SK-N-SH (cell line): ENCODE measurements at regions of chrX and their contacts with region 1.

Region 1: GRCh38 chrX:134377537-134377936 is 82.4 kb upstream of the HPRT1 start:
- DNase-seq: peak; percentile 37
- H3K4me3 ChIP-seq: no peak overlapping the region
- H3K27ac ChIP-seq: no peak overlapping the region
- H3K4me1 ChIP-seq: no peaks in the 10 kb centered on the region; a peak in 1 of 4 replicates
- H3K27me3 ChIP-seq: no peaks in the 10 kb centered on the region
- CTCF ChIP-seq: peak; percentile 72
- EP300 ChIP-seq: no peak
- RAD21 ChIP-seq: peak; percentile 63

Region 2: DNA sequence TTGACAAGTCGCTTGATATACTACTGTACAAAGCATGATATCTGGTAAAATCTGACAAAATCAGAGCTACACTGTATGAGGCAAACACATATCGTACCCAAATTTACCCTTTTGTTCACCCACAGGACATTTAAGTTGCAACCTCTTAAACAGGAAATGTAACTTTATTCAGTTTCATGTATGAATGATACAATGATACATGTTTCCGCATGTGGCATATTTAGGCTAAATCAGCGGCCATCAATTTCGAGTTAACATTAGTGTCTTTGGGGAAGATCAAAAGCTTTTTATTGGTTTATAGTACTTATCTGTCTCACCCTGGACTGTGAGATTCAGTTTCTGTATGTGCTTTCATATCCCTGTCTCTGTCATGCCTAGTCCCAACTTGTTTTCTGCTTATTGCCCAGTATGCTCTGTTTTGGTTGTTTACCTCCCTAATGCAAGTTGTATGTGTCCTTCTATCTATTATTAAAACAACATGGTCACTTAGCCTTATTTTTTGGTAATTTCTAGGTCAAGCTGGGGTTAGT is 14.9 kb before region 1 on chrX:
- CTCF ChIA-PET with region 1: interaction called, 10 read pairs
- POLR2A ChIA-PET with region 1: no interaction called
- DNase-seq: no peak
- H3K4me3 ChIP-seq: no peak overlapping the region
- H3K27ac ChIP-seq: no peak overlapping the region
- H3K4me1 ChIP-seq: no peaks in the 10 kb centered on the region
- H3K27me3 ChIP-seq: peaks cover 7% of the 10 kb centered on the region; the same call in 1 of the 2 replicates
- CTCF ChIP-seq: no peak
- EP300 ChIP-seq: no peak
- RAD21 ChIP-seq: no peak

Region 3: GRCh38 chrX:134388161-134389109 is 10.9 kb after region 1 on chrX:
- CTCF ChIA-PET with region 1: interaction called, 19 read pairs
- POLR2A ChIA-PET with region 1: no interaction called
- DNase-seq: no peak
- H3K4me3 ChIP-seq: no peak overlapping the region
- H3K27ac ChIP-seq: no peak overlapping the region
- H3K4me1 ChIP-seq: no peaks in the 10 kb centered on the region
- H3K27me3 ChIP-seq: no peaks in the 10 kb centered on the region
- CTCF ChIP-seq: no peak
- EP300 ChIP-seq: no peak
- RAD21 ChIP-seq: no peak

Region 4: DNA sequence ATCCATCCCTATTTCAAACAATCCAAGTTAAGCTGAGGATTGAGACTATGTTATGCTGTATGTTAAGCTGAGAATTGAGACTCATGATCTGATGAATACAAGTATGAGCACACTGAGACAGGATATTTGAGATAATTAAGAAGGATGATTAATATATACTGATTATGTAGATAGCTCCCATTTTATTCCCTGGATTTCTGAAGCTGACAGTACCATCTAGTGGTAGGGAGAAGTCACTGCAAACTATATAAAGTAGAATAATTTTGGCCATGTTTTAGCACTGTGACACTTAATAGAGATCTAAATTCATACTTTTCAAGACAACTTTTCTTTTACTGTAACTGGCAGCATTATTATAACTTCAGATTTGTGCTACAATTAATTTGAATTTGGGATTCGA is 18.6 kb after region 1 on chrX:
- CTCF ChIA-PET with region 1: interaction called, 24 read pairs
- POLR2A ChIA-PET with region 1: no interaction called
- DNase-seq: peak; percentile 38
- H3K4me3 ChIP-seq: no peak overlapping the region
- H3K27ac ChIP-seq: peak overlapping the region in 1 of 2 experiments; percentile 58; a peak in 1 of 4 replicates
- H3K4me1 ChIP-seq: no peaks in the 10 kb centered on the region; a peak in 1 of 4 replicates
- H3K27me3 ChIP-seq: no peaks in the 10 kb centered on the region
- CTCF ChIP-seq: peak; percentile 93
- EP300 ChIP-seq: no peak
- RAD21 ChIP-seq: peak; percentile 71